Activated CD4-positive, alpha-beta memory T cell treated with anti-CD3 and anti-CD28 coated beads for 36 hours (primary cell): ENCODE measurements at regions of chr12 and their contacts with region 1.

Region 1: GRCh38 chr12:22443379-22444316 is 100.7 kb downstream of the C2CD5 start:
- DNase-seq: peak; percentile 67
- H3K4me3 Mint-ChIP-seq: no peak overlapping the region
- H3K27ac Mint-ChIP-seq: no peak overlapping the region
- H3K4me1 Mint-ChIP-seq: peaks cover 4% of the 10 kb centered on the region
- H3K27me3 Mint-ChIP-seq: no peaks in the 10 kb centered on the region

Region 2: DNA sequence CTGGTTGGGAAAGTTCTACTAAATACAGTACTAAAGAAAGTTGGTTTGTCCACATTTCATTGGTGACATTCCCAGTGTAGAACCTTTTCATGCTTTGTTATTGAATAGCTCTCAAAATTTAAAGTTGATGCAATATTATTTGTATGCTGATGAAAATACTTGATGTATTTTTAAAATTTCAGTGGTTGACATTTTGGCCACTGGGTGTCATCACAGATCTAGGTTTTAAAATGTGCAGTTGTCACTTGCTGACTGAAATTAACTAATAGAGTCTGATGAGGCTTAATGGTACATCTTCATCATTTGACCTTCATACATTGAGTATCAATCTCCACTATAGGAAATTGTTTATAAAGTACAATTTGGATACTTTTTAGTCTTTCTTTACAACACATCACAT is 360.5 kb before region 1 on chr12:
- CTCF ChIA-PET with region 1: interaction called, 8 read pairs
- POLR2A ChIA-PET with region 1: no interaction called
- intact Hi-C with region 1: loop called (anchors 1 kb)
- DNase-seq: no peak
- H3K4me3 Mint-ChIP-seq: no peak overlapping the region
- H3K27ac Mint-ChIP-seq: no peak overlapping the region
- H3K4me1 Mint-ChIP-seq: no peaks in the 10 kb centered on the region
- H3K27me3 Mint-ChIP-seq: no peaks in the 10 kb centered on the region

Region 3: GRCh38 chr12:22190969-22191368 is 252.7 kb before region 1 on chr12:
- CTCF ChIA-PET with region 1: no interaction called
- POLR2A ChIA-PET with region 1: no interaction called
- intact Hi-C with region 1: loop called (anchors 10 kb)
- DNase-seq: no peak
- H3K4me3 Mint-ChIP-seq: no peak overlapping the region
- H3K27ac Mint-ChIP-seq: no peak overlapping the region
- H3K4me1 Mint-ChIP-seq: peaks cover 4% of the 10 kb centered on the region
- H3K27me3 Mint-ChIP-seq: no peaks in the 10 kb centered on the region

Region 4: GRCh38 chr12:22287776-22288621 is 155.6 kb before region 1 on chr12:
- CTCF ChIA-PET with region 1: no interaction called
- POLR2A ChIA-PET with region 1: no interaction called
- intact Hi-C with region 1: no loop called
- DNase-seq: peak; percentile 73
- H3K4me3 Mint-ChIP-seq: peak overlapping the region; percentile 77
- H3K27ac Mint-ChIP-seq: peak overlapping the region; percentile 95
- H3K4me1 Mint-ChIP-seq: peaks cover 59% of the 10 kb centered on the region
- H3K27me3 Mint-ChIP-seq: no peaks in the 10 kb centered on the region

Region 5: DNA sequence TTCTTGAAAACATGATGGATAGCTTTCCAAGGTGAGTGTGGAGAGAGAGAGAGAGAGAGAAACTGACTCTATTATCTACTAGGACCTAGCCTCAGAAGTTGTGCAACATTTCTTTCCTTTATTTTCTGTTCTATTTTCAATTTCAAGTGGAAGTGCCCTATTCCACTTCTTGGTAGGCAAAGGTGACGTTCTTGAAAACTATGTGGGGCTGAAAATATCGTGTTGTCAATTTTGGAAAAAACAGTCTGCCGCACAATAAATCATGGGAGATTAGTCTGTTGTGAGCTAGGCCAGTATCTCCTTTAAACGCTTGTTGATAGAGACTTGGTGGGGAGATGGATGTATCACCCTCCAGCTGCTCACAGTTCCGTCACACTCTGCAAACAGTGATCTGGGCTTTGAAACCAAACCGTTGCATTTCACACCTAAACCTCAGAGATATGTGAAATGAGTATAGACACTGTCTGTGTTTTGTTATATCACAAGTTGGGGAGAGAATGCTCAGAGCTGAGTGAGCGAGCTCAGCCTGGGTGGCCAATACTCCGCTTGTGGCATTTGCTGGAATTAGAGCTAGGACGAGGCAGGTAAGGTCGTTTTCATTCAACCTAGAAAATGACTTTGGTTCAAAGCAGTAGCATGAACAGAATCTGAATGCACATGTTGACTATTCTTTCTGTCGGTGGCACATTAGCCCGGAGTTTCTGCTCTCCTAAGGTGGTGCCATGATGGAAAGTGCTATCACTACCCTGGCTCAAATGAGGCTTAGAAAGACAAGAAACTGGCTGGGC is 34.1 kb before region 1 on chr12:
- CTCF ChIA-PET with region 1: interaction called, 5 read pairs
- POLR2A ChIA-PET with region 1: no interaction called
- intact Hi-C with region 1: loop called (anchors 2 kb)
- DNase-seq: peak; percentile 78
- H3K4me3 Mint-ChIP-seq: peak overlapping the region; percentile 69
- H3K27ac Mint-ChIP-seq: peak overlapping the region; percentile 88
- H3K4me1 Mint-ChIP-seq: peaks cover 49% of the 10 kb centered on the region
- H3K27me3 Mint-ChIP-seq: no peaks in the 10 kb centered on the region

Region 6: GRCh38 chr12:22477166-22477893 is 33.7 kb after region 1 on chr12:
- CTCF ChIA-PET with region 1: no interaction called
- POLR2A ChIA-PET with region 1: no interaction called
- intact Hi-C with region 1: no loop called
- DNase-seq: no peak
- H3K4me3 Mint-ChIP-seq: no peak overlapping the region
- H3K27ac Mint-ChIP-seq: peak overlapping the region; percentile 14
- H3K4me1 Mint-ChIP-seq: peaks cover 27% of the 10 kb centered on the region
- H3K27me3 Mint-ChIP-seq: no peaks in the 10 kb centered on the region